ENCODE measurements at regions of chr18 and their contacts with region 1.

Region 1: GRCh38 chr18:74551936-74552555 is 17.7 kb downstream of the CNDP1 start:
- DNase-seq: peak; percentile 84 to 94 (median 87)
- H3K4me3 ChIP-seq: no peak overlapping the region
- H3K27ac ChIP-seq: no peak overlapping the region
- H3K4me1 ChIP-seq: peaks cover 0 to 2% (median 0%) of the 10 kb centered on the region in 3 donors
- H3K27me3 ChIP-seq: no peaks in the 10 kb centered on the region
- CTCF ChIP-seq: peak; percentile 91

Region 2: DNA sequence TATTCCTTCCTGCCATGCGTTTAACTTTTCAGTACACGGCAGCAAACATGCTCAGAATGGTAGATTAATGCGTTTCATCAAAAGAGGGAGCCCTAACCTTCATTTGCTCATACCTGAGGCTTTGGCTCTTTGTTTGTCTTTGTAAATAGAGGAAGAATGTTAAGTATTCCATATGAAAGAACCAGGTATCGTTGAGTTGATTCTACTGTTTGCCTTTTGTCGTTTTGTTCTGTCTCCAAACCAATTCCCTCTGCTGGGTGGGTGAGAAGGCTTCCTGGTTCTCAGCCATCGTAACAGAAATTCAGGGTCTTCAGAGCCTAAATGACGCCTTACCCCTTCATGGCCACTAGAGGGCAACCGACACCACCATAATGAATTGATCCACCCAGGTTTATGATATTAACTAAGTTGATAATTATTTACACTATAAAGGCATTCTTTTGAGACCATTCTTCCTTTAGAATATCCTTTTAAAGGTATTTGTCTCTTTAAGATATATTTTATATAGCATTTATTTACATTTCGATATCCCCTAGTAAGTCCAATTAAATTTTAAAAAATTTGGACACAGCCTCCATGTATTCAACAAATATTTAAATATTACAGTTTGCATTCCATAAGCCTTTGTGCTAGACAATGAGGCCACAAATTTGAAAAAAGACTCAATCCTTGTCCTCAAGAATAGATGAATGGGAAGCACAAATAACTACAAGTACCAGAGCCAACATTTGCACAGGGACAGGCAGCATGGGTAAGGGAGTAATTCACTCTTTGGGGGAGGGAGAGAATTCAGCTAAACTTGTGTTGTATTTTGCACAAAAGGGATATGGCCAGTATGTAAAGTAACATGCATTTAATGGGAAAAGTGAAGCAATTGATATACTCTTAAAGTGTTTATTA is 355.6 kb before region 1 on chr18:
- intact Hi-C with region 1: loop called (anchors 10 kb)
- DNase-seq: peak in 4 of 5 donors; percentile 60 to 89 (median 77)
- H3K4me3 ChIP-seq: peak overlapping the region; percentile 67 to 81 (median 74)
- H3K27ac ChIP-seq: peak overlapping the region; percentile 51 to 54
- H3K4me1 ChIP-seq: peaks cover 0 to 13% (median 10%) of the 10 kb centered on the region in 3 donors
- H3K27me3 ChIP-seq: no peaks in the 10 kb centered on the region
- CTCF ChIP-seq: peak; percentile 95

Region 3: GRCh38 chr18:74353169-74353775 is 198.8 kb before region 1 on chr18:
- intact Hi-C with region 1: loop called (anchors 5 kb)
- DNase-seq: peak in 4 of 5 donors; percentile 71 to 88 (median 80)
- H3K4me3 ChIP-seq: no peak overlapping the region
- H3K27ac ChIP-seq: no peak overlapping the region
- H3K4me1 ChIP-seq: no peaks in the 10 kb centered on the region
- H3K27me3 ChIP-seq: no peaks in the 10 kb centered on the region
- CTCF ChIP-seq: peak; percentile 93